Head of caudate nucleus (tissue), 42 donors: ENCODE measurements at regions of chr1 and their contacts with region 1.

Region 1: GRCh38 chr1:203625628-203626019 is 1.0 kb upstream of the ATP2B4 start:
- DNase-seq: peak in 29 of 42 donors; percentile 20 to 80 (median 49)

Region 2: DNA sequence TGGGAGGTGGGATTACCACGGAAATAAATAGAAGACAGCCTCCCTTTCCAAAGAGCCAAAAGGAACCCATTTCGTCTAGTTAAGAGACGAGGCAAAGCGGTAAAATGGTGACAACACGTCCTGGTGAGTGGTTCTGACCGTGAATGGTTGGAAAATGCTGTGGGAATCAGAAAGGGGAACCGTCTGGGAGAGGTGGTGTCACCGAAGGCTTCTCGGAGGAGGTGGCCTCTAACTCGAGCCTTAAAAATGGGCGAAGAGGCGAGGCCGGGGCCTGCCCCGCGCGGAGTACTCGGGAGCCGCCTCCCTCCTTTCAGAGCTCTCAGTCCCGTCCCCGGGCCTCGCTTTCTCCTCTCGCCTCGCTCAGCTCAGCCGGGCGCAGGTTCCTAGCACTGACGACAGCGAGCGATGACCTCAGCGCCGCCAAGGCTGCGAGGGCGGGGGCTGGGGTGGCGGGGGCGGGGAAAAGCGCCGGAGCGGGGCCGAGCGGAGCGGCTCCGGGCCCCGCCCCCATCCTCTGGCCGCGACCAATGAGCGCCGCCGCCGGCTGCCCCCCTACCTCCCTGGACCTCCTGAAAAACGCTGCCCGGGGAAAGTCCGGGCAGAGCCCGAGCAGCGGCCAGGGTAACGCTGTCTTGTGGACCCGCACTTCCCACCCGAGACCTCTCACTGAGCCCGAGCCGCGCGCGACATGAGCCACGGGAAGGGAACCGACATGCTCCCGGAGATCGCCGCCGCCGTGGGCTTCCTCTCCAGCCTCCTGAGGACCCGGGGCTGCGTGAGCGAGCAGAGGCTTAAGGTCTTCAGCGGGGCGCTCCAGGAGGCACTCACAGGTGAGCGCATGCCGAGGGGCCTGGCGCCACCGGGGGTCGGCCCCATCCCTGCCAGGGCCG is 320.5 kb before region 1 on chr1 and contains the start of gene BTG2:
- intact Hi-C with region 1: no loop called
- DNase-seq: peak; percentile 88 to 97 (median 94)

Region 3: DNA sequence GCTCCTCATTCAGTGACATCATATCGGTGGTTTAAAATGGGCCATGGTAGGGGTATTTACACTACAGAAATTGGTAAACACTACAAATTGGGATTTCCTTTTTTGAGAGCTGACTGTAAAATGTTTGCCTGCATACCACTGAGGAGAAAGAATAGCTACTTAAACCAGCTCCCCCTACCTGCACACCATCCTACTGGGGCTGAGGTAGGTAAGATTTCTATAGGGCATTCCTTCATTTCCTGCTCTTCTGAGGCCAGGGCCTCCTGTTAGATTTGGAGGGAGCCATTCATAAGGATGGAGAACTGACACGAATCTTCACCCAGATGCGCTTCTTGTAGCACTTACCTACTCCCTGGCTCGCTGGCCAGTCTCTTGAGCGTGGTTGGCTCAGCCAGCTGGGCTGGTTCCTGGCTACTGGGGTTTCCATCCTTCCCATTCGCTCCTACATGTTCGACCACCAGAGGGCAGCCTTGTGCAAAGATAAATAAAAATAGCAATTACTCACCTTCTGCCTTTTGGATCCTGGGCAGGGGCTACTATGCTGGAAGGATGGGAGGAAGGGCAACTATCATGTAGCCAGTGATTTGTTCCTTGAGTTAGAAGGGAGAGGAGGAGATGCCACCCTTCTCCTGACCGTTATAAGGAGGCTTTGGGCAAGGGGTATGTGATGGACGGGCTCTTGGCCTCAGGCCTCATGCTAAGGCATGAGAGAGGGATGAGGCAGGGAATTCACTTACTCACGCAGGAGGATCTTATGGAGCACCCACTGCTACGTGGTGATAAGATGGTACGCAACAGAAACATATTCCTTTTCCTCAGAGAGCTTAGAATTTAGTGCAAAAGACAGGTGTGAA is 121.0 kb before region 1 on chr1:
- intact Hi-C with region 1: loop called (anchors 5 kb)
- DNase-seq: peak; percentile 51 to 94 (median 83)

Region 4: DNA sequence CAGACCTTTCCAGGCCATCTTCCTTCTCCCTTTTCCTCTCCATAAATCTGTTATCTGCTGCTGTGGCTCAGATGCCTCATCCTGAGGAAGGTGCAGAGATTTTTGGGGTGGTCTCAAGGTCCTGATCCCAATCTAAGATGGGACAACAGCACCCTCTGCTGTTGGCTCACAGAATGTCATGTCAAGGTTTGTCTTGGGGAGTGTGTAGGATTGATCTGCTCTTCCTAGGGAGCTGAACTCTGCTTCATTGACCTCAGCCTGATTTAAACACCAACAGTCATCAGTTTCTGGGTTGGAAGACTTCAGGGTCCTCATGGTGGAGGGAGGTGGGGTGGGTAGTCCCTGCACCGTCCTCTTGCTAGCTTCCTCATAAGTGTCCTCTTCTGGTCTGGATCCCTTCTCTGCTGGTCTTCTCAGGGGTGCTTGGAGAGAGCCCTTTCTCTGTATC is 76.5 kb after region 1 on chr1:
- intact Hi-C with region 1: loop called (anchors 1 kb)
- DNase-seq: peak in 41 of 42 donors; percentile 28 to 91 (median 73)

Region 5: DNA sequence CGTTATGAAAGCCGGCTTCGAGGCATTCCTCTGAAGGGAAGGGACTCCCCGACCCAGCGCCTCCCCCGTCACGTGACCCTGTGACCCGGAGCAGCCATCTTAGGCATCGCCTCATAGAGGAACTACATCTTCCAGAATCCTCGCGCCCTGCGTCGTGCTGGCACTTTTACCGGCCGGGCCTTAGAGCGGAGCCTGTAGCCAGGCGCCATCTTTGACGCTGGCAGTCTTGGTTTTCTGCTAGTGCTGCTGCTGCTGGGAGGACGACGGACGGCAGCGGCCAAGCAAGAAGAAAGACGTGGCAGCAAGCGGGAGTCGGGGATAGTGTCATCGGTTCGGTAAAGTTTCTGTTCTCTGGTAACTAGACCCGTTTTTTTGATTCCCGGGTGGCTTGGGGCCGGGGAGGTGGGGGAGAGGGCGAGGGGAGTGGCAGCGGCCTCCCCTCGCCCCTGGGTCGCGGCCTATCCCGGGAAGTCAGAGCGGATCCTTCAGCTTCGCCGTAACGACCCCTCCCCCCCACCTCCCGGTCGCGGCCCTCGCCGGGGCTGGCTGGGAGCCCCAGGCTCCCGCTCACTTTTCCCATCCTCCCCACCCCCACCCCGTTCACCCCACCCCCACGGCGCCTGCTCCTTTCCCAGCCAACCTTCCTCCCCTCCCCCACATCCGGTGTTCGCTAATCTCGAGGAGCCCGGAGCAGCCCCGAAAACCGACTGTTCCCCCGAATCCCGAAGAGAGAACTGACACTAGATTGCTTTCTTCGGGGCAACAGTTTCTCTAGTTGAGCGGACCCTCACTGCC is 170.0 kb after region 1 on chr1 and contains the starts of genes ZBED6 and ZC3H11A:
- intact Hi-C with region 1: no loop called
- DNase-seq: peak; percentile 98 to 100 (median 99)